CD8-positive, alpha-beta T cell (primary cell): ENCODE measurements at regions of chr20 and their contacts with region 1.

Region 1: GRCh38 chr20:21235484-21236445 is 67.4 kb upstream of the XRN2 start:
- DNase-seq: peak; percentile 18 to 70 (median 63)
- ATAC-seq: peak; percentile 68
- H3K4me3 ChIP-seq: no peak overlapping the region
- H3K4me3 Mint-ChIP-seq: no peak overlapping the region
- H3K27ac ChIP-seq: no peak overlapping the region
- H3K27ac Mint-ChIP-seq: no peak overlapping the region
- H3K4me1 ChIP-seq: no peaks in the 10 kb centered on the region
- H3K4me1 Mint-ChIP-seq: peaks cover 4% of the 10 kb centered on the region
- H3K27me3 ChIP-seq: no peaks in the 10 kb centered on the region
- H3K27me3 Mint-ChIP-seq: no peaks in the 10 kb centered on the region
- CTCF ChIP-seq: peak; percentile 94

Region 2: GRCh38 chr20:20860078-20860806 is 375.5 kb before region 1 on chr20:
- CTCF ChIA-PET with region 1: interaction called, 25 read pairs
- POLR2A ChIA-PET with region 1: no interaction called
- intact Hi-C with region 1: loop called (anchors 2 to 10 kb)
- DNase-seq: peak; percentile 64 to 90 (median 77)
- ATAC-seq: peak; percentile 58
- H3K4me3 ChIP-seq: no peak overlapping the region
- H3K4me3 Mint-ChIP-seq: no peak overlapping the region
- H3K27ac ChIP-seq: no peak overlapping the region
- H3K27ac Mint-ChIP-seq: no peak overlapping the region
- H3K4me1 ChIP-seq: no peaks in the 10 kb centered on the region
- H3K4me1 Mint-ChIP-seq: no peaks in the 10 kb centered on the region
- H3K27me3 ChIP-seq: peaks cover 0 to 3% of the 10 kb centered on the region in 2 experiments
- H3K27me3 Mint-ChIP-seq: peaks cover 22% of the 10 kb centered on the region
- CTCF ChIP-seq: peak; percentile 82

Region 3: DNA sequence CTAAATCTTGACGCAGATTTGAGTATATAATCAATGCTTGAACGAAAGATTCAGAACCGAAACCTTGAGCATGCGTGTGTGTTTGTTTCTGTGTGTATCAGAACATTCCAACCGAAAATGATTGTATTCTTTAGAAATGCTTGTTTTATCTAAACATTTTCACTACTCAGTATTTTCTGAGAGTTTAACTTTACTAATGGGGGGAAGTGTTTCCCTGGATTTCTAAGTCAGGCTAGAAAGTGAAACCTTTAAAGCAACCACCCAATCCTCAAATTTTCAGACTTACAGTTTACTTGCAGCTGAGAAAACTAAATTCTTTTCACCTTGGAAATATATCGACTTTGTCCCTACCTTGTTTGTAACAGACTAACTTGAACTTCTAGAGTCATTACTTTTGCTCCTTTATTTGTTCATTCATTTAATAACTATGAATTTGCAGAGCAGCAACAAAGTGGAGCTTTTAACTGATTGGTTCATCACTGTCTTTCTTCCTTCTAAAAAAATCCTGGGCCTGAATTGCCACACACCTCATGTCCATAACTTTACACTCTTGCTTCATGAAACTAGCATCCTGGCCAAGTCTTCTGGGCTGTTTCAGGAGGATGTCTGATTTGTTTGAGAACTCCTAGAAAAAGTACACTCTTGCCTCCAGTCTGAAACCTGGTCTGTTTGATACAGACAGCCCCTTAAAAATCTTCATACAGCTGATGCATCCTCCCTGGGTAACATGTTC is 10.4 kb before region 1 on chr20:
- CTCF ChIA-PET with region 1: interaction called, 21 read pairs
- POLR2A ChIA-PET with region 1: no interaction called
- intact Hi-C with region 1: no loop called
- DNase-seq: no peak
- ATAC-seq: no peak
- H3K4me3 ChIP-seq: no peak overlapping the region
- H3K4me3 Mint-ChIP-seq: no peak overlapping the region
- H3K27ac ChIP-seq: no peak overlapping the region
- H3K27ac Mint-ChIP-seq: no peak overlapping the region
- H3K4me1 ChIP-seq: no peaks in the 10 kb centered on the region
- H3K4me1 Mint-ChIP-seq: no peaks in the 10 kb centered on the region
- H3K27me3 ChIP-seq: no peaks in the 10 kb centered on the region
- H3K27me3 Mint-ChIP-seq: no peaks in the 10 kb centered on the region
- CTCF ChIP-seq: no peak

Region 4: DNA sequence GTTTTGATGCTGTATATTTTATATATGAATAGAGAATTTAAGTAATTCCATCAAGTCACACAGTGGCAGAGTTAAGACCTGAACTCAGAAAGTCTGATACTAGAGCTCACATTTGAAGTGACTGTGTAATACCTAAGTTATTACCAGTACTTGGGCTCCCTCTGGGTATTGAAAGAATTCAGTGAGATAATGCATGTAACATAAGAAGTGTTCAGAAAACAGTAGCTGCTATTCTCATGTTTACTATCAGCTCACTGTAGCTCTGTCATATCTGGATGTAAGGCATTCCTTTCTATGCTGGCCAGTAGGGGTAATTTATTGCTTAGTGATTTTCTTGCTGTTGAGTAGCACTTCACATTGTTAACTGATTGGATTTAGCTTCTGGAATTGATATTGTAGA is 116.9 kb after region 1 on chr20:
- CTCF ChIA-PET with region 1: interaction called, 6 read pairs
- POLR2A ChIA-PET with region 1: no interaction called
- intact Hi-C with region 1: loop called in 1 of 2 experiments (anchors 10 kb)
- DNase-seq: no peak
- ATAC-seq: no peak
- H3K4me3 ChIP-seq: no peak overlapping the region
- H3K4me3 Mint-ChIP-seq: no peak overlapping the region
- H3K27ac ChIP-seq: no peak overlapping the region
- H3K27ac Mint-ChIP-seq: no peak overlapping the region
- H3K4me1 ChIP-seq: no peaks in the 10 kb centered on the region
- H3K4me1 Mint-ChIP-seq: no peaks in the 10 kb centered on the region
- H3K27me3 ChIP-seq: no peaks in the 10 kb centered on the region
- H3K27me3 Mint-ChIP-seq: no peaks in the 10 kb centered on the region
- CTCF ChIP-seq: no peak

Region 5: DNA sequence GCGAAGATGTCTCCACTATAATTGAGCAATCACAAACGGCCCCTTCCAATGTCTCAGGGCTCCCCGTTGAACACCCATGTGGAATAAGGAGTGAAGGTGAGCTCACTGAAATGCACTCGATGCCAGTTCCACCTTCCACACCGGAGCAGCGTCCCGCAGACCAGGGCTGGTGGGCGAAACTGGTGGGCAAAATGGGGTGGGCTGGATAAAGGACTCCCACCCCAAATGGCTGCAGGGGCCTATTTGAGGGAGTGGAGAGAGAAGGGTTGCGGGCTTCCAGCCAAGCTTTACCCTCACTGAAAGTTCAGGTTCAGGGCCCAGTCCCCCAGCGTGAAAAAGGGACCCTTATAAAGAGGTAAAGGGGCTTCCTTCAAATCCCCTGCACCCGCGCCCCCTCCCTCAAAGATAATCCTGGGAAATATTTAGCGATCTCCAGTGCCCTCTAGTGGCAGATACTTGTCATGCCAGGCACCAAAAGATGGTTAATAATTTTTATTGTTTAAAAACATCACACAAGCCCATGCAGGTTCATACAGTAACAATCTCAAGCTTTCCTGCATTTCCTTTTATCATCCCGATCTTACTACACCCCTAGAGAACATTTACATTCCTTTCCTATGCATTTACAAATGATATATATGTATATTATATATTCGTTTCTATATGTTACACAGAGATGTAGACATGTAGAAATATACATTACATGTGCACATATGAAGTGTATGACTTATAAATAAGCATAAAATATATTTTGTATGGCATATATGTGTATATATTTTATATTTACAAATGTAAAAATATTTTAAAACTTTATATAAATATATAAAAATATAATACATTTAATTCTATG is 336.3 kb after region 1 on chr20:
- CTCF ChIA-PET with region 1: interaction called, 23 read pairs
- POLR2A ChIA-PET with region 1: no interaction called
- intact Hi-C with region 1: loop called (anchors 2 to 5 kb)
- DNase-seq: peak in 4 of 9 experiments; percentile 16 to 49 (median 34)
- ATAC-seq: no peak
- H3K4me3 ChIP-seq: no peak overlapping the region
- H3K4me3 Mint-ChIP-seq: no peak overlapping the region
- H3K27ac ChIP-seq: no peak overlapping the region
- H3K27ac Mint-ChIP-seq: no peak overlapping the region
- H3K4me1 ChIP-seq: peaks cover 4% of the 10 kb centered on the region
- H3K4me1 Mint-ChIP-seq: no peaks in the 10 kb centered on the region
- H3K27me3 ChIP-seq: peaks cover 0 to 2% of the 10 kb centered on the region in 2 experiments
- H3K27me3 Mint-ChIP-seq: peaks cover 19% of the 10 kb centered on the region
- CTCF ChIP-seq: peak; percentile 86